Heart left ventricle (tissue), 16 donors: ENCODE measurements at regions of chr18 and their contacts with region 1.

Region 1: DNA sequence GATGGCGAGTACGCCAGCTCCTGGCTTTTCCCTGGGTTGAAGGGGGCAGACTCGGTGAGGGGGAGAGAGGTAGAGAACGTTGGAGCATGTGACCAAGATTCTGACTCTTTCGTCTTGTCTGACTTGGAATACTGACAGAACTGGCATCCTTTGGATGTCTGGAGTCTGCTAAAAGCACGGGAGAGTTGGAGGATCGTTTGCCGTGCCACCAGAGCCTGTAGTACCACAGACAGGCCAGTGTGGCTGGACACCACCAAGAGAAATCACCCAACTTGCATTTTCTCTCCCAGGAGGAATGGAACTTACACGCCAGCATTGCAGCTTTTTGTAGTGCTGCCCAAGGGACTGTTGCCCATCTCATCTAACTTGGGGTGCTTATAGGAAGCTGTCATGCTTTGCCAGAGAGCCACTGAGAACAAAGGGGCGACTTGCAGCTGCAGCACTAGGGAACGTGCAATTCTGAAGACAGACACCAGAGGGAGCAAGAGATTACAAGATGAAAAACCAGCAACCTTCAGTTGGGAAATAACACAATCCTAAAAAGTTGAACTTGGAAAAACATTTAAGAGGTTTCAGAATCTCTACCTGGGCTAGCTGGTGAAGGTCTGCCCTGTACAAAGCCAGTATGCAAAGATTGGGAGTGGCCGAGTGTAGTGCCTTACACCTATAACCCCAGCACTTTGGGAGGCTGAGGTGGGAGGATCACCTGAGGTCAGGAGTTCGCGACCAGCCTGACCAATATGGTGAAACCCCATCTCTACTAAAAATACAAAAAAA is 24.1 kb downstream of the PSMG2 start:
- DNase-seq: peak in 2 of 5 donors; percentile 44 to 49
- ATAC-seq: peak; percentile 37 to 68 (median 66)
- H3K4me3 ChIP-seq: no peak overlapping the region
- H3K27ac ChIP-seq: no peak overlapping the region
- H3K4me1 ChIP-seq: no peaks in the 10 kb centered on the region
- H3K27me3 ChIP-seq: no peaks in the 10 kb centered on the region
- CTCF ChIP-seq: peak; percentile 71 to 93 (median 87)
- POLR2A ChIP-seq: no peak

Region 2: GRCh38 chr18:12921178-12921577 is 194.2 kb after region 1 on chr18:
- intact Hi-C with region 1: loop called in 1 of 10 experiments (anchors 2 kb)
- DNase-seq: no peak
- ATAC-seq: no peak
- H3K4me3 ChIP-seq: no peak overlapping the region
- H3K27ac ChIP-seq: no peak overlapping the region
- H3K4me1 ChIP-seq: no peaks in the 10 kb centered on the region
- H3K27me3 ChIP-seq: no peaks in the 10 kb centered on the region
- CTCF ChIP-seq: no peak
- POLR2A ChIP-seq: no peak

Region 3: GRCh38 chr18:13166023-13166422 is 439.1 kb after region 1 on chr18:
- intact Hi-C with region 1: loop called in 1 of 10 experiments (anchors 10 kb)
- DNase-seq: no peak
- ATAC-seq: no peak
- H3K4me3 ChIP-seq: no peak overlapping the region
- H3K27ac ChIP-seq: no peak overlapping the region
- H3K4me1 ChIP-seq: no peaks in the 10 kb centered on the region
- H3K27me3 ChIP-seq: no peaks in the 10 kb centered on the region
- CTCF ChIP-seq: no peak
- POLR2A ChIP-seq: no peak